A549 (cell line): ENCODE measurements at regions of chr12 and their contacts with region 1.

Region 1: GRCh38 chr12:7042842-7043241 is 17.7 kb upstream of the C1S start:
- DNase-seq: peak; percentile 52 to 69
- ATAC-seq: peak; percentile 63 to 91; a peak in 4 of 6 replicates
- H3K4me3 ChIP-seq: no peak overlapping the region
- H3K27ac ChIP-seq: no peak overlapping the region
- H3K4me1 ChIP-seq: no peaks in the 10 kb centered on the region
- CTCF ChIP-seq: peak; percentile 52
- EP300 ChIP-seq: no peak
- POLR2A ChIP-seq: no peak
- RAD21 ChIP-seq: peak; percentile 55 to 65

Region 2: DNA sequence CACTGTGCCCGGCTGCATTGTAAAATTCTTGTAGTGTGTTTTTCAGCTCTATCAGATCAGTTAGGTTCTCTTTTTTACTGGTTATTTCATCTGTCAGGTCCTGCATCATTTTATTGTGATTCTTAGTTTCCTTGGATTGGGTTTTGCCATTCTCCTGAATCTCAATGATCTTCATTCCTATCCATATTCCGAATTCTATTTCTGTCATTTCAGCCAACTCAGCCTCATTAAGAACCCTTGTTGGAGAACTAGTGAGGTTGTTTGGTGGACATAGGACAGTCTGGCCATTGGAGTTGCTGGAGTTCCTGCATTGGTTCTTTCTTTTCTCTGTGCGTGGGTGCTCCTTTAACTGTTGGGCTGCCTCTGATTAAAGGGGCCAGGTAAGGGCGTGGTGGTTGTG is 12.1 kb after region 1 on chr12:
- CTCF ChIA-PET with region 1: interaction called, 15 read pairs
- POLR2A ChIA-PET with region 1: no interaction called
- DNase-seq: no peak
- ATAC-seq: no peak
- H3K4me3 ChIP-seq: no peak overlapping the region
- H3K27ac ChIP-seq: no peak overlapping the region
- H3K4me1 ChIP-seq: peaks cover 6% of the 10 kb centered on the region
- CTCF ChIP-seq: no peak
- EP300 ChIP-seq: no peak
- POLR2A ChIP-seq: no peak
- RAD21 ChIP-seq: no peak

Region 3: GRCh38 chr12:7060353-7060954 is 17.6 kb after region 1 on chr12 and contains the start of gene C1S:
- CTCF ChIA-PET with region 1: interaction called, 15 read pairs
- POLR2A ChIA-PET with region 1: no interaction called
- DNase-seq: peak; percentile 93 to 95
- ATAC-seq: peak; percentile 99
- H3K4me3 ChIP-seq: peak within 1 kb of the TSS; percentile 15; the same call in 1 of the 3 replicates
- H3K27ac ChIP-seq: peak within 1 kb of the TSS; percentile 77 to 93
- H3K4me1 ChIP-seq: peaks cover 22% of the 10 kb centered on the region
- CTCF ChIP-seq: peak; percentile 96
- EP300 ChIP-seq: no peak
- POLR2A ChIP-seq: peak; percentile 30; the same call in 1 of the 2 replicates
- RAD21 ChIP-seq: peak; percentile 98 to 99
- polyA plus RNA-seq, gene C1S: 107 and 109 TPM in 2 replicates

Region 4: GRCh38 chr12:7075939-7076338 is 33.1 kb after region 1 on chr12:
- CTCF ChIA-PET with region 1: no interaction called
- POLR2A ChIA-PET with region 1: no interaction called
- DNase-seq: no peak
- ATAC-seq: no peak
- H3K4me3 ChIP-seq: no peak overlapping the region
- H3K27ac ChIP-seq: peak overlapping the region; percentile 91; a peak in 3 of 6 replicates
- H3K4me1 ChIP-seq: peaks cover 26% of the 10 kb centered on the region
- CTCF ChIP-seq: no peak
- EP300 ChIP-seq: no peak
- POLR2A ChIP-seq: no peak
- RAD21 ChIP-seq: no peak

Region 5: GRCh38 chr12:7092229-7092985 is 49.6 kb after region 1 on chr12 and contains the start of gene C1R:
- CTCF ChIA-PET with region 1: no interaction called
- POLR2A ChIA-PET with region 1: no interaction called
- DNase-seq: peak; percentile 69 to 72
- ATAC-seq: peak; percentile 52 to 80
- H3K4me3 ChIP-seq: peak within 1 kb of the TSS; percentile 37
- H3K27ac ChIP-seq: peak within 1 kb of the TSS; percentile 85 to 91
- H3K4me1 ChIP-seq: peaks cover 20% of the 10 kb centered on the region; the same call in 2 of the 3 replicates
- CTCF ChIP-seq: peak; percentile 92
- EP300 ChIP-seq: no peak
- POLR2A ChIP-seq: no peak
- RAD21 ChIP-seq: peak; percentile 88 to 92
- polyA plus RNA-seq, gene C1R: 36.0 and 57.8 TPM in 2 replicates

Region 6: GRCh38 chr12:7162691-7163114 is 119.9 kb after region 1 on chr12:
- CTCF ChIA-PET with region 1: no interaction called
- POLR2A ChIA-PET with region 1: no interaction called
- DNase-seq: peak; percentile 56 to 66
- ATAC-seq: peak; percentile 84 to 90
- H3K4me3 ChIP-seq: no peak overlapping the region
- H3K27ac ChIP-seq: no peak overlapping the region
- H3K4me1 ChIP-seq: 0 out of 3 replicates have a peak, but pooled peaks cover 4% of the 10 kb centered on the region
- CTCF ChIP-seq: peak; percentile 45
- EP300 ChIP-seq: no peak
- POLR2A ChIP-seq: no peak
- RAD21 ChIP-seq: peak in 1 of 2 experiments; percentile 42; a peak in 3 of 5 replicates

Region 7: DNA sequence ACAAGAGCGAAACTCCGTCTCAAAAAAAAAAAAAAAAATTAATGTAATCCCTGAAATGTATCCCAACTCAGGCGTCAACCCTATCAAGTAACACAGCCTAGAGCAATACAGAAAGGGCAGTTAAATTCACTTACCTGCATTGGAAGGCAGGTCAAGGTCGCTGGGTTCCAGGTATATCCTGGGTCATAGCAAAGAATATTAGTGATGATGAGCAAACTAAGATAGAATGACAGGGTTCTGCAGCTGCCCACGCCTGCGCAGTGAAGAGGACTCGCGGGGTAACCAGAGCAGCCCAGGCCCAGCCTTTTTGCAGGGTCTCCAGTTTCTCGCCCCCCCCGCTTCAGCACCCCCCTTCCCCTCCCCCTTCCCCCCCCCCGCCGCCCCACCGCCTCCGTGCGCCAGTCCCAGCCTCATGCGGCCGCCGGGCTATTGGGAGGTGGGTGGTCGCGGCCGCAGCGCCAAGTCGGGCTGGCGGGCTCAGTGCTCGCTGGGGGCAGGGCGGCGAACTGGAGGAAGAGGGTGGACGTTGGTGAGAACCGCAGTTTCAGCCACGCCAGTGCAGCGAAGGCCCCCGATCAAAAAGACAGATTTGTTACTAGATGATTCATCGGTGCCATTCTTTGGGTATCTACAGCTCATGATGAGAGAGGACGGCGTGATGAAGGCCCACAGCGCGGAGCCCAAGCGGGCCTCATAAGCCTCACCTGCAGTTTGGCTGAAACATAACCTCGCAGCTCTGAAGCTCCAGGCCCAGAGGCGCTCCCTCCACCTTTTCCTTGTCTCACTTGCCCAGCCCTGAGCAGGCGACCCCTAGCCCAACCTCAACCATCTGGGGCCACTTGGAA is 872.9 kb after region 1 on chr12:
- CTCF ChIA-PET with region 1: no interaction called
- POLR2A ChIA-PET with region 1: no interaction called
- DNase-seq: no peak
- ATAC-seq: peak in 1 of 2 experiments; percentile 24; a peak in 4 of 6 replicates
- H3K4me3 ChIP-seq: no peak overlapping the region
- H3K27ac ChIP-seq: no peak overlapping the region
- H3K4me1 ChIP-seq: no peaks in the 10 kb centered on the region
- CTCF ChIP-seq: no peak
- EP300 ChIP-seq: no peak
- POLR2A ChIP-seq: no peak
- RAD21 ChIP-seq: no peak